Breast epithelium (tissue), 4 donors: ENCODE measurements at regions of chr1 and their contacts with region 1.

Region 1: GRCh38 chr1:181893937-181894336 is 167.6 kb downstream of the ZNF648 start:
- DNase-seq: no peak
- H3K4me3 ChIP-seq: no peak overlapping the region
- H3K27ac ChIP-seq: no peak overlapping the region
- H3K4me1 ChIP-seq: no peaks in the 10 kb centered on the region
- H3K27me3 ChIP-seq: no peaks in the 10 kb centered on the region
- CTCF ChIP-seq: no peak
- POLR2A ChIP-seq: no peak

Region 2: DNA sequence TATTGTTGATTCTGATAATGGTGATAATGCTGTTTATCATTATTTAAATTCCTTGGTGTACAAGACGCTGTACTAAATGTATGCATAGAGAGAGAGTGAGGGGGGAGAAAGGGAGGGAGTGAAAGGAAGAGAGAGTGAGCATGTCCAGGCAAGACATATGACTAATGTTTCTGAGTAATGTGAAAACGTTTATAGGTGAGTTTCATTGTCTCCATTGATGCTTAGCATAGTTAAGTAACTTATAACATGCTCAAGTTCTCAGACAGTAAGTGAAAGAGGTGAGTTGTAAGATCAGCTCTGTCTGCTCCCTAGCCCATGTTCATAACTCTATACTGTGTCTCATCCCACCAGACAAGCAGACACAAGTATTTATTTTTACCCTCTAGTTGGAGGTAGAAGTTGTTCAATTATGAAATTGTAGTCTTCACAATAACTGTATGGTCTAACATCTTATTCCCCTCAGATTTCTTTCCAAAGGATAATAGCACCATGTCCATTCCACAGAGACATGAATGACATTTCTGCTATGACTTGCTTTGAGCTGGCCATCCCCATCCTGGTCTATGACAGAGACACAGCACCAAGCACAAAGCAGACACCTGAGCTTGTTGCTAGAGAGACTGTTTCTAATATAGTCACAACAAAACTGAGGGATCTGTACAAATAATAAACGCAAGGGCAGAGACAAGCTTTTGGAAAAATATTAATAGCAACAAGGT is 125.6 kb before region 1 on chr1:
- intact Hi-C with region 1: no loop called
- DNase-seq: no peak
- H3K4me3 ChIP-seq: no peak overlapping the region
- H3K27ac ChIP-seq: no peak overlapping the region
- H3K4me1 ChIP-seq: no peaks in the 10 kb centered on the region
- H3K27me3 ChIP-seq: no peaks in the 10 kb centered on the region
- CTCF ChIP-seq: no peak
- POLR2A ChIP-seq: no peak

Region 3: GRCh38 chr1:183349201-183349711 is 1455.3 kb after region 1 on chr1:
- intact Hi-C with region 1: loop called (anchors 10 kb)
- DNase-seq: peak in 1 of 2 donors; percentile 30
- H3K4me3 ChIP-seq: no peak overlapping the region
- H3K27ac ChIP-seq: peak overlapping the region in 1 of 2 donors; percentile 32
- H3K4me1 ChIP-seq: no peaks in the 10 kb centered on the region
- H3K27me3 ChIP-seq: no peaks in the 10 kb centered on the region
- CTCF ChIP-seq: no peak
- POLR2A ChIP-seq: no peak